B cell (primary cell): ENCODE measurements at regions of chr1 and their contacts with region 1.

Region 1: DNA sequence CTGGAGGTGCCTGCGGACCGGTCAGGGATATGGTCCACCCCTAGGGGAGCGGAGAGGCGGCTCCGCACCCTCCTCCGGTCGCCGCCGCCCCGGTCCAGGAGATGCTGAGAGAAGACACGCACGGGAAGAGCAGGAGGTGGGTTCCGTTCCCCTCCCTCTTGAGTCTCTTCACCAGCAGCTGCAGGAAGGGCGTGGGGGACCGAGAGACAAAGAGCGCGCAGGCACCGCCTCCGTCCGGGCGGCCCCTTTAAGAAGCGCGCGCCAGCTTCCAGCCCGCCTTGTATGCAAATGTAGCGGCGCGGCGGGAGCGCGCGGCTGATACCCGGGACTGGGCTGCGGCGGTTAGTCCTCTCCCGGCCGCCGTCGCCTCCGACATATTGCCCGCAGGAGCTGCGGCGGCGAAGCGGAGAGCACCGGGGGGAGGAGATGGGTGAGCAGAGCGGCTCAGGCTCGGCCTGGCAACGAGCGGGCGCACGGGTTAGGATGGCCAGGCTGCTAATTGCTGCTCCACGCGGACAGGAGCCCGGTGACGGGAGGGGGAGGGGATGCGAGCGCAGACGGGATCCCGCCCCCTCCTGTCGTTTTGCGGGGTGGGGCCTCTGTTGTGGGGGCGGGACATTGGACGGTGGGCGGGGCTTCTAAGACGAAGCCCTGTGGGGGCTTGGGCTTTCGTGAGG is at the start of gene TMEM39B:
- DNase-seq: peak; percentile 98
- ATAC-seq: peak; percentile 80
- H3K4me3 ChIP-seq: peak within 1 kb of the TSS; percentile 76 to 92 (median 81)
- H3K4me3 Mint-ChIP-seq: peak within 1 kb of the TSS; percentile 83
- H3K27ac ChIP-seq: peak within 1 kb of the TSS; percentile 73 to 80
- H3K27ac Mint-ChIP-seq: peak within 1 kb of the TSS; percentile 79
- H3K4me1 ChIP-seq: peaks cover 14 to 17% of the 10 kb centered on the region in 2 donors
- H3K4me1 Mint-ChIP-seq: peaks cover 29% of the 10 kb centered on the region
- H3K27me3 ChIP-seq: no peaks in the 10 kb centered on the region
- H3K27me3 Mint-ChIP-seq: no peaks in the 10 kb centered on the region
- CTCF ChIP-seq: no peak
- total RNA-seq, gene TMEM39B: 28.8 and 30.9 TPM in 2 replicates

Region 2: GRCh38 chr1:31296486-31297276 is 776.1 kb before region 1 on chr1 and contains the starts of genes SNRNP40 and ZCCHC17:
- CTCF ChIA-PET with region 1: no interaction called
- POLR2A ChIA-PET with region 1: no interaction called
- intact Hi-C with region 1: loop called (anchors 2 kb)
- DNase-seq: peak; percentile 98
- ATAC-seq: peak; percentile 97
- H3K4me3 ChIP-seq: peak within 1 kb of the TSS; percentile 68 to 99 (median 77)
- H3K4me3 Mint-ChIP-seq: no peak within 1 kb of the TSS
- H3K27ac ChIP-seq: peak within 1 kb of the TSS; percentile 82 to 93
- H3K27ac Mint-ChIP-seq: peak within 1 kb of the TSS; percentile 63
- H3K4me1 ChIP-seq: peaks cover 23 to 25% of the 10 kb centered on the region in 2 donors
- H3K4me1 Mint-ChIP-seq: peaks cover 24% of the 10 kb centered on the region
- H3K27me3 ChIP-seq: no peaks in the 10 kb centered on the region
- H3K27me3 Mint-ChIP-seq: no peaks in the 10 kb centered on the region
- CTCF ChIP-seq: no peak
- total RNA-seq, gene SNRNP40: 65.6 and 67.7 TPM in 2 replicates
- total RNA-seq, gene ZCCHC17: 20.3 and 21.5 TPM in 2 replicates

Region 3: DNA sequence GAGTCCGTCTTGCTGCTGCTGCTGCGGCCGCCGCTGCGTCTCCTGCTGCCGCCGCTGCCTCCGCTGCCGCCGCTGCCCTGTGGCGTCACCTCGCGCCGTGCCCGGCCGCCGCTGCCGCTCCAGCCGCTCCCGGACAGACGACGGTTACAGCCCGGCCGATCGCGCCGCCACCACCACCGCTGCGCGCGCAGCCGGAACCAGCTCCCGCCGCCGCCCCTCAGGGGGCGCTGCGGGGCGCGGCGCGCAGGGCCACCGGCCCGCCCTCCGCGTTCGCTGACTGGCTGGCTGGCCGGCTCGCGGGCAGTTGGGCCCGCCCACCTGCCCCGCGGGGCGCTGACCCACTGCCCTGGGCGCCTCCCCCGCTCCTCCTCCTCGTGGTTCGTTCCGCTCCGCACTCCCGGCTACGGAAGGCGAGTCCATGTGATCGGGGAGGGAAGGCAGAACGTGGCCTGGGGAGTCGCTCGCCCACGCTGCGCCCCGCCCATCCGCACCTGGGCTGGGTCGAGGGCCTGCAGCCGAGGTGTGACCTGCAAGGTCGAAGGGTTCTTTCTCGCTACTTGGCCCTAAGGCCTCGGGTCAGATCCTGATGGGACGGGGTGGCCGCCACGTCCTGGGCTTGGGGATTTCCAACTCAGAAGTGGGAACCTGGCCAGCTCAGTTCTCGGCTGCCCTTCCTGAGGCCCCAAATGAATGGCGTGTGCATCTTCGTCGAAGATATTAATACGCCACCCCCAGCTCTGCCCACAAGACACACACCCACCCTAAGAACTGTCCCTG is 134.4 kb before region 1 on chr1 and contains the start of gene PTP4A2:
- CTCF ChIA-PET with region 1: interaction called, 4 read pairs
- POLR2A ChIA-PET with region 1: interaction called, 4 read pairs
- intact Hi-C with region 1: loop called (anchors 1 kb)
- DNase-seq: peak; percentile 95
- ATAC-seq: peak; percentile 82
- H3K4me3 ChIP-seq: peak within 1 kb of the TSS; percentile 59 to 97 (median 78)
- H3K4me3 Mint-ChIP-seq: peak within 1 kb of the TSS; percentile 91
- H3K27ac ChIP-seq: peak within 1 kb of the TSS; percentile 78 to 86
- H3K27ac Mint-ChIP-seq: peak within 1 kb of the TSS; percentile 95
- H3K4me1 ChIP-seq: peaks cover 73 to 76% of the 10 kb centered on the region in 2 donors
- H3K4me1 Mint-ChIP-seq: peaks cover 67% of the 10 kb centered on the region
- H3K27me3 ChIP-seq: no peaks in the 10 kb centered on the region
- H3K27me3 Mint-ChIP-seq: no peaks in the 10 kb centered on the region
- CTCF ChIP-seq: peak; percentile 63
- total RNA-seq, gene PTP4A2: 184 and 193 TPM in 2 replicates

Region 4: GRCh38 chr1:31961536-31961935 is 111.2 kb before region 1 on chr1:
- CTCF ChIA-PET with region 1: no interaction called
- POLR2A ChIA-PET with region 1: no interaction called
- intact Hi-C with region 1: no loop called
- DNase-seq: peak; percentile 53
- ATAC-seq: no peak
- H3K4me3 ChIP-seq: peak overlapping the region in 1 of 5 experiments; percentile 24
- H3K4me3 Mint-ChIP-seq: peak overlapping the region; percentile 45
- H3K27ac ChIP-seq: peak overlapping the region in 1 of 2 donors; percentile 75
- H3K27ac Mint-ChIP-seq: peak overlapping the region; percentile 86
- H3K4me1 ChIP-seq: peaks cover 21 to 33% of the 10 kb centered on the region in 2 donors
- H3K4me1 Mint-ChIP-seq: peaks cover 27% of the 10 kb centered on the region
- H3K27me3 ChIP-seq: no peaks in the 10 kb centered on the region
- H3K27me3 Mint-ChIP-seq: no peaks in the 10 kb centered on the region
- CTCF ChIP-seq: no peak

Region 5: DNA sequence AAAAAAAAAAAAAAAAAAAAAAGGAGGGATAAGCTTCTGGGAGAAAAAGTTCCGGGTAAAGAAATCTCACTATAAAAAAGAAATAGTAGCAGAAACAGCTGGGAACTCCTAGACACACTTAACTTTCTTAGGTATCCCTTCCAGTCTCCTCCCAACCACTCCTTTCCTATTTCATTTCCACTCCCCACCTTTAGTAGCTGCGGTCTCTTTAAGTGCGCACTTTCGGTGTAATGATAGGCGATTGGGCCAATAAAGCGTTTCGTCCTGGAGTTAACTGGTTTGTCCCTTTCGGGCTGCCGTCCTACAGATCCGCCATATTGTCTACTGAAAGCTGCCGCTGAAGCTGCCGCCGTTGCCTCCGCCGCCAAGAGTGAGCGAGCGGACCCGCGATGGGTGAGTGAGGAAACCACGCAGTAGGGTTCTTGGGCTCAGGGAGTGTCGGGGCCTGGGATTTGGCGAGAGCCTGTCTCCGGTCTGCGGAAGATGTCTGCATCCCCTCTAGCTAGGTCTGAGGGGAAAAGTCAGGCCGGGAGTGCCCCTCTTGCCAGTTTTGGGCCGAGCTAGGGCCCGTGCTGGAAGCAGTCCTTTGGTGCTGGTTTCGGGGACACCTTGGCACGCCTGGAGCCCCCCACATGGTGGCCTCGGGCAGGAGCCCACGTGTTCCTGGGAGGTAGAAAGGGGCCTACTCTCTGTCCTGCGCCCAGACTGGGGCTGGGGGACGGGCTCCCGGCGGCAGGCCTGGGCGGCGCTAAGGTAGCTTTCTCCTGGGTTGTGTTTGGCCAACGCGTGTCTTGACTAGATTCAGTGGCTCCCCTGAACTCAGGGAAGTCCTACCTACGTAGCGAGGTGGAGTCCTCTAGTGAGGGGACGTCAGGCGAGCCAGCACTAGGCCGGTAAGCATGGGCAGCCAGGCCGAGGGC is 35.2 kb after region 1 on chr1 and contains the start of gene KPNA6:
- CTCF ChIA-PET with region 1: interaction called, 41 read pairs
- POLR2A ChIA-PET with region 1: interaction called, 31 read pairs
- intact Hi-C with region 1: loop called (anchors 1 kb)
- DNase-seq: peak; percentile 96
- ATAC-seq: peak; percentile 83
- H3K4me3 ChIP-seq: peak within 1 kb of the TSS; percentile 86 to 99 (median 93)
- H3K4me3 Mint-ChIP-seq: peak within 1 kb of the TSS; percentile 100
- H3K27ac ChIP-seq: peak within 1 kb of the TSS; percentile 86 to 88
- H3K27ac Mint-ChIP-seq: peak within 1 kb of the TSS; percentile 100
- H3K4me1 ChIP-seq: peaks cover 33 to 44% of the 10 kb centered on the region in 2 donors
- H3K4me1 Mint-ChIP-seq: peaks cover 44% of the 10 kb centered on the region
- H3K27me3 ChIP-seq: no peaks in the 10 kb centered on the region
- H3K27me3 Mint-ChIP-seq: no peaks in the 10 kb centered on the region
- CTCF ChIP-seq: no peak
- total RNA-seq, gene KPNA6: 49.9 and 54.8 TPM in 2 replicates

Region 6: GRCh38 chr1:32205401-32206370 is 132.9 kb after region 1 on chr1 and contains the start of gene IQCC:
- CTCF ChIA-PET with region 1: no interaction called
- POLR2A ChIA-PET with region 1: no interaction called
- intact Hi-C with region 1: loop called (anchors 10 kb)
- DNase-seq: peak; percentile 90
- ATAC-seq: peak; percentile 62
- H3K4me3 ChIP-seq: peak within 1 kb of the TSS in 4 of 5 experiments; percentile 59 to 78 (median 62)
- H3K4me3 Mint-ChIP-seq: peak within 1 kb of the TSS; percentile 88
- H3K27ac ChIP-seq: peak within 1 kb of the TSS in 1 of 2 donors; percentile 46
- H3K27ac Mint-ChIP-seq: peak within 1 kb of the TSS; percentile 68
- H3K4me1 ChIP-seq: peaks cover 42 to 58% of the 10 kb centered on the region in 2 donors
- H3K4me1 Mint-ChIP-seq: peaks cover 60% of the 10 kb centered on the region
- H3K27me3 ChIP-seq: no peaks in the 10 kb centered on the region
- H3K27me3 Mint-ChIP-seq: no peaks in the 10 kb centered on the region
- CTCF ChIP-seq: no peak
- total RNA-seq, gene IQCC: 2.0 and 2.1 TPM in 2 replicates

Region 7: DNA sequence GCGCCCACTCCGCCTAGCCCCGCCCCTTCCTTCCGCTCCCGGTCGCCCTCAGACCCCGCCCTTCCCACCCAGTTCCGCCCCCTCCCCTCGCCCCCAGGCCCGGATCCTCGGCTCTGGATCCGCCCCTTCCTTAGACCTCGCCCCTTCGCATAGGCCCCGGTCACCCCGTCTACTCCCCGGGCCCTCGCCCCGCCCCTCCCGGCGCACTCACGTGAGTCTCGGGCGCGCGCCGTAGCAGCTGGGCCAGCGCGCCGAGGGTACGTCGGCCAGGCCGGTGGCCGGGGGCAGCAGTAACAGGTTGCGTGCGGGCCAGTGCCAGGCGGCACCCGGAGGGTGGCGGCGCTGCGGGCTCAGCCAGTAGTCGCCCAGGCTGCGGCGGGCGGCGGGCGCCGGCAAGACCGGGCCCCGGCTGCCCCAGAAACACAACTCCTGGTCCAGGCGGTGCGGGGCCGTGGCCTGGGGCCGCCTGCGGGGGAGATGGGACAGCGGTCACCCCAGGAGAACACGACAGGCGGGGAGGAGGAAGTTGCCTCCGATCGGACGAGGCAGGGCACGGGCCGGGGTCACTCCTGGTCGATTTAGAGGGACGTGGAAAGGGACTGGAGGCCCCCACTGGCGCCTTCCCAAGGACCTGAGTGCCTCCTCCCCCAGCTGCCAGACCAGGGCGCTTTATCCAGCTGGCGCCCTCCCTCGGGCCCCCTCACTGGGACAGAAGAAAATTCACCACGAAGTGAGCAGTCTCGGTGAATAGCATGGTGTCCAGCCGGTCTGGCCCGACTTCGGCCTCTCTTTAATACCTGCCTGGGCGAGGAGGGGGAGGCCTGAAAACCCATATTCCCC is 278.9 kb after region 1 on chr1:
- CTCF ChIA-PET with region 1: no interaction called
- POLR2A ChIA-PET with region 1: interaction called, 3 read pairs
- intact Hi-C with region 1: loop called (anchors 2 kb)
- DNase-seq: peak; percentile 95
- ATAC-seq: peak; percentile 96
- H3K4me3 ChIP-seq: peak overlapping the region; percentile 40 to 75 (median 63)
- H3K4me3 Mint-ChIP-seq: peak overlapping the region; percentile 88
- H3K27ac ChIP-seq: peak overlapping the region; percentile 54 to 91
- H3K27ac Mint-ChIP-seq: peak overlapping the region; percentile 88
- H3K4me1 ChIP-seq: peaks cover 14 to 27% of the 10 kb centered on the region in 2 donors
- H3K4me1 Mint-ChIP-seq: peaks cover 22% of the 10 kb centered on the region
- H3K27me3 ChIP-seq: no peaks in the 10 kb centered on the region
- H3K27me3 Mint-ChIP-seq: no peaks in the 10 kb centered on the region
- CTCF ChIP-seq: no peak

Region 8: DNA sequence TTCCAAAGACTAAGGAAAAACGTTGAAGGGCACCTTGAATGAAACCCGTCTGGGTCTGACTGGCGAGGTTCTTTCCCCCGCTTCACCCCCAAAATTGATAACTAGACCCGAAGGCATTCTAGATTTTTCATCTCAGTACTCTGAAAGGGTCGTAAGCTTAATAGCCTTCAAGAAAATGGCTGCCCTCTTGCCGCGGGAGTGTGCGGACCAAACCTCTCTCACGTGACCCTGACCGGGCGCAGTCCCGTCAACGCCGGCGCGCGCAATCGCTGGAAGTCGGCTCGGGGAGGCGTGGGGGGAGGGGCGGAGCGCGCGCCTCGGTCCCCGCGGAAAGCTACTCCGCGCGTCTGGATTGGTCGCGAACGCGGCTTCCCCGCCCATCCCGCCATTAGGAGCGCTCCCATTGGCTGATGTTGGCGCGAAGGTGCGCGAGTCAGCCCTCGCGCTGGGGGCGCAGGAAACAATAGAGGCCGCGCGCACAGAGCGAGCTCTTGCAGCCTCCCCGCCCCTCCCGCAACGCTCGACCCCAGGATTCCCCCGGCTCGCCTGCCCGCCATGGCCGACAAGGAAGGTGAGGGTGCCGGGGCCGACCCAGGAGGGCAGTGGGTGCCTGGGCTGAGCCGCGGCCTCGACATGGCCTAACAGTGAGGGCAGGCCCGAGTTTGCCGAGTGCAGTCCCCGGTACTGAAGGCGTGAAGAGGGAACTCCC is 578.1 kb after region 1 on chr1 and contains the start of gene RBBP4:
- CTCF ChIA-PET with region 1: no interaction called
- POLR2A ChIA-PET with region 1: interaction called, 5 read pairs
- intact Hi-C with region 1: loop called (anchors 2 kb)
- DNase-seq: peak; percentile 99
- ATAC-seq: peak; percentile 83
- H3K4me3 ChIP-seq: peak within 1 kb of the TSS; percentile 77 to 96 (median 81)
- H3K4me3 Mint-ChIP-seq: peak within 1 kb of the TSS; percentile 98
- H3K27ac ChIP-seq: peak within 1 kb of the TSS; percentile 97 to 100
- H3K27ac Mint-ChIP-seq: peak within 1 kb of the TSS; percentile 100
- H3K4me1 ChIP-seq: peaks cover 21 to 31% of the 10 kb centered on the region in 2 donors
- H3K4me1 Mint-ChIP-seq: peaks cover 55% of the 10 kb centered on the region
- H3K27me3 ChIP-seq: no peaks in the 10 kb centered on the region
- H3K27me3 Mint-ChIP-seq: no peaks in the 10 kb centered on the region
- CTCF ChIP-seq: no peak
- total RNA-seq, gene RBBP4: 192 and 204 TPM in 2 replicates